ENCODE measurements at regions of chr6 and their contacts with region 1.

Region 1: DNA sequence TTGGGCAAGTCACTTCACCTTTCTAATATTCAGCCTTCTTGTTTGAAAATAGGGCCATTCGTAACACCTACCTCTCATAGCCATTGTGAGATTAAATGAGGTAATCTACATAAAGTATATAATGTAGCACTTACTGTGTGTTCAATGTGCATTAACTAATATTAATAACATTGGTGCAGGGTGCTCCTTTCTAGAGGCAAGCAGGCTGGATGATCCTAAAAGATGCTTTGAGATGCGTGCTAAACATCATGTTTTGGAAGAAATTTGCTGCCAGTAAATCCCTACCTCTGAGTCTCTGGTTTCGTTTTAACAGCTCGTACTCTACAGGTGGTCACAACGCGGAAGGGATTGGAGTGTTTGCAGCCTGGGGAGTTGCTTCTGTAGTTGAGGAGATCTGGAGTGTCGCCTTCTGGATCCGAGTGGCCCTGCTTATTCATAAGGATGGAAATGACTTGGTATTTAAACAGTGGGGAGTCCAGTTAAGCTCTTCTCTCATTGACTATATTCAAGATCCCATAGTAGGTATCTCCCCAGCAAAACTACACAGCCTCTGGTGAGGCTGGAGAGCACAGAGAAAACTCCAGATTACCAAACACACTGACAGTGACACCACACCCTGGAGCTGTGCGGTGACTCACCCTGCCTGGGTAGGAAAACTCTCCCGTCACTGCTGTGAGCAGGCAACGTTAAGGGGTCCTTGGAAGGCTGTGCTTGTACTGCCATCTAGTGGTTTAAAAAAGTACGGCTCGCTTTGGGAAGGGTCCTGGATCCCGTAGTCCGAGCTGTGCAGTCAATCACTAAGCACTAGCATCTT is 107.9 kb downstream of the MAP3K7 start:
- DNase-seq: peak; percentile 89
- H3K4me3 ChIP-seq: no peak overlapping the region
- H3K27ac ChIP-seq: no peak overlapping the region
- H3K4me1 ChIP-seq: peaks cover 9% of the 10 kb centered on the region
- H3K27me3 ChIP-seq: peaks cover 0 to 3% of the 10 kb centered on the region in 2 experiments
- CTCF ChIP-seq: peak; percentile 75 to 81
- POLR2A ChIP-seq: no peak

Region 2: DNA sequence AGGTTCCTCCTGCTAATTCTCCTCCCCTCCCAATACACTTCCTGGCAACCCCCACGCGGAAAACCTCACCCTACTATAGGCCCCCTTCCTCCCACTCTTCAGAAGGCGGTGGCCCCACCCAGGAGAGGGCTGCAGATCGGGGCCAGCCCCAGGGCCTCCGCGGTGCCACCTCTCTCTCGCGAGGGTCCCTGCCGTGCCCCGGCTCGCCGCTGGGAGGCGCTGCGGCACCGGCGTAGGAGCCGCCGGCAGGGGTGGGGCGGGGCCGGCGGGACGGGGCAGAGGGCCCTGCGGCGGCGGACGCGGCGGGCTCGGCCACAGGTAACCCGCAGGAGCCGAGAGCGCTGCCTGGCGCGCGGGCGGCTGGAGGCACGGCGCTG is 1046.1 kb before region 1 on chr6 and contains the start of gene ANKRD6:
- CTCF ChIA-PET with region 1: interaction called, 3 read pairs
- POLR2A ChIA-PET with region 1: no interaction called
- dilution Hi-C with region 1: no loop called
- intact Hi-C with region 1: loop called (anchors 10 kb)
- DNase-seq: peak; percentile 37
- H3K4me3 ChIP-seq: peak within 1 kb of the TSS; percentile 26 to 64 (median 52)
- H3K27ac ChIP-seq: no peak within 1 kb of the TSS
- H3K4me1 ChIP-seq: peaks cover 18% of the 10 kb centered on the region
- H3K27me3 ChIP-seq: peaks cover 2 to 7% of the 10 kb centered on the region in 2 experiments
- CTCF ChIP-seq: peak; percentile 80 to 82
- POLR2A ChIP-seq: no peak
- total RNA-seq, gene ANKRD6: 7.7 and 9.6 TPM in 2 replicates

Region 3: DNA sequence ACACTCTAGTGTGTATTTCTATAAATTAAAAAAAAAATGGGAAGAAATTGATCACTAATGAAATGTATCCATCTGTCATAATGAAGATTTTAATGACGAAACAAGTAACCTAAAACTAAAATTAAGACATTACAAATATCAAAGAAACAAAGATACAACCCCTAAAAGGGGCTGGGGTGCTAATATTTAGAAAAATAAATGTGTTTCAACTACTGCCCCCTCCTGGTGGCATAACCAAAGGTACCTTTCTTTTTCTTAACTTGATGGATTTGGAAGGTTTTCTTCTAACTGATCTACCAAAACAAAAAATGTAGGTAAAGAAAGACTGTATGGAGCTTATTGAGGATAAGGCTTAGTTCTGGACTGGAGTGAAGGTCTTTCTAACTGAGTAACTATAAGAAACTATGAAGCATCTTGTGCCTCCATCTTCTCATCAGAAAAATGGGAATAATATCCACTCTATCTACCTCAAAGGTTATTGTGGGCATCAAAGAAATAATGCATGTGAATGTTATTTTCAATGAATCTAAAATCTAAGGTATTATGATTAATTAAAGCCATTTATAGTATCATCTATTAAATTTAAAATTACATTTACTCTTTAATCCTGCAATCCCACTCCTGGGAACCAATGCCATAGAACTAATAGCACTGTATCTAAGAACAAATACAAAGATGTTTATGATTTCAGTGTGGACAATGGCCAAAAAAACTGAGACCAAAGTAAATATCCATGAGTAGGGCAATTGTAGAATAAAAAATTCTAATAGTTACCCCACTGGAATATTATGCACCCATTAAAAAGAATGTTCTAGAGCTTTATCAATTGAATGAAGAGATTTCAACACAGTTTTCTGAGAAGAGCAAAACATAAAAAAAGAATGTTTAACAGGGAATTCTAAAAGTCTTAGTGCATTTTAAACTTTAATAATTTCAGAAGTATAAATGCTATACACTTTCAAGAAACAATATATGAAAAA is 299.5 kb before region 1 on chr6:
- CTCF ChIA-PET with region 1: interaction called, 5 read pairs
- POLR2A ChIA-PET with region 1: no interaction called
- dilution Hi-C with region 1: no loop called
- intact Hi-C with region 1: loop called (anchors 10 kb)
- DNase-seq: no peak
- H3K4me3 ChIP-seq: no peak overlapping the region
- H3K27ac ChIP-seq: no peak overlapping the region
- H3K4me1 ChIP-seq: peaks cover under 1% of the 10 kb centered on the region
- H3K27me3 ChIP-seq: peaks cover 9 to 11% of the 10 kb centered on the region in 2 experiments
- CTCF ChIP-seq: peak; percentile 22 to 23
- POLR2A ChIP-seq: no peak

Region 4: GRCh38 chr6:90493332-90493731 is 14.3 kb after region 1 on chr6:
- CTCF ChIA-PET with region 1: interaction called, 21 read pairs
- POLR2A ChIA-PET with region 1: no interaction called
- dilution Hi-C with region 1: no loop called
- intact Hi-C with region 1: no loop called
- DNase-seq: peak; percentile 91
- H3K4me3 ChIP-seq: no peak overlapping the region
- H3K27ac ChIP-seq: peak overlapping the region; percentile 66
- H3K4me1 ChIP-seq: peaks cover 36% of the 10 kb centered on the region
- H3K27me3 ChIP-seq: no peaks in the 10 kb centered on the region
- CTCF ChIP-seq: no peak
- POLR2A ChIP-seq: peak; percentile 46

Measured in endothelial cell of umbilical vein (primary cell).